ENCODE measurements at regions of chr5 and their contacts with region 1.

Region 1: DNA sequence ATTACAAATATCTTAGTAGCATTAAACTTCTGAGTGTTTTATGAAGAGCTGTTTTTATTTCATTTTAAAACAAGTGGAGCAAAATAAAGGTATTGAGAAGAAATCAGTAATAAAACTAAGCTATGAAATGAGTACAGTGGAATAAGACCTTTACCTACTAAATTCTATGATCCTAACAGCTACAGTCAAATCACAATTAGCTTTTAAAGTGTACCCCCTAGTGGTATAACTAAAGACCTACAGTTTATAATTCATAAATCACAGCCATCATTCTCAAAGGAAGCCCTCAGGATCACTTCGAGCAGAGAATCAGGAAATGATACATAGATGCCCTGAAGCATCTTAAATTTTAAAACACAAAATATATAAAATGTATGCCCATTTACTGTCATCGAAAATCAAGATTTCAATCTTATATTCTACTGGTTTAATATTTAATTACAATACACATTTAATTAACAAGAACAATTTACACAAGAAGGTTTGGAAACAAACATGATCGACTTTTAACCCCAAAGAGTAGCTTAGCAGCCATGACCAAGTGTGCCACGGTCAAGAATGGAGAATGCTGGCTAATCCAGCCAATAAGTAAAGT is 12.3 kb downstream of the CCNH start:
- DNase-seq: no peak
- H3K4me3 Mint-ChIP-seq: no peak overlapping the region
- H3K27ac Mint-ChIP-seq: no peak overlapping the region
- H3K4me1 Mint-ChIP-seq: peaks cover 15% of the 10 kb centered on the region
- H3K27me3 Mint-ChIP-seq: no peaks in the 10 kb centered on the region

Region 2: GRCh38 chr5:86880785-86881492 is 519.5 kb before region 1 on chr5:
- intact Hi-C with region 1: loop called (anchors 5 kb)
- DNase-seq: peak; percentile 18
- H3K4me3 Mint-ChIP-seq: no peak overlapping the region
- H3K27ac Mint-ChIP-seq: no peak overlapping the region
- H3K4me1 Mint-ChIP-seq: no peaks in the 10 kb centered on the region
- H3K27me3 Mint-ChIP-seq: no peaks in the 10 kb centered on the region

Region 3: GRCh38 chr5:86968301-86968753 is 432.1 kb before region 1 on chr5:
- intact Hi-C with region 1: loop called (anchors 1 kb)
- DNase-seq: no peak
- H3K4me3 Mint-ChIP-seq: no peak overlapping the region
- H3K27ac Mint-ChIP-seq: no peak overlapping the region
- H3K4me1 Mint-ChIP-seq: peaks cover 4% of the 10 kb centered on the region
- H3K27me3 Mint-ChIP-seq: peaks cover 36% of the 10 kb centered on the region

Region 4: DNA sequence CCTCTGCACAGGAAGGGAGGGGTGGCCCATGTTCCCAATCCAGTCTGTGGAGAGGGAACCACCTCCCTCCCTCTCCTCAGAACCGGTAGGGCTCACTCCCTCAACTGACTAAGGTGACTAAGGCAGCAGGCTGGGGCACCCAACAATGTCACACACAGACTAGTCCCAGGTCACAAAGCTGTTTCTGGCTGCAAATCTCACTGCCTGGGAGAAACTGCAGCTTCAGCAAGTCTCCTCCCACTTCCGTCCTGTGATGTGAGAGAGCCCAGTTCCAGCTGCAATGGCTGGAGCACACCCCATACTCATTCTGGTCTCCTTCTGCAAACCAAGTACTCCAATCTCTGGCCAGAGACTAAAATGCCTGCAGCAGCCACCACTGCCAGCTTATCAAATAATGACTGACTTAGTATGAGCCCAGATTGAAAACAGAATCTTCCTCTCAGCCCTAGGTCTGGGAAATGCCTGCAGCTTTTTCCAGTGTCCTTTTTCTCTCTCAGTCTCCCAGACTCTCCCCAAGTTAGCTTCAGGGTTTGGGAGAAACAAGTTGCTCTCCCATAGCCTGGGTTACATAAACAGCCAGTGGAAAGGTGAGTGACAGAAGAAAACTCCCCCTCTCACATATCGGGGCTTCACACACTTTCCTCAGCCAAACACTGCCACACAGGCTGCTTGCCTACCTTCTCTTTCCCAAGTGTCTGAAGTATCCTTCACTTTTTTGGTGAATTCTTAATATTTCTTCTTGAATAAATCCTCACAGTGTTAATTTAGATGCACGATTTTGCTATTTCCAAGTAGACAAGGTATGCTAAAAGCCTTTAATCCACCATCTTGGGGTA is 380.1 kb before region 1 on chr5:
- intact Hi-C with region 1: loop called (anchors 5 kb)
- DNase-seq: peak; percentile 26
- H3K4me3 Mint-ChIP-seq: no peak overlapping the region
- H3K27ac Mint-ChIP-seq: no peak overlapping the region
- H3K4me1 Mint-ChIP-seq: peaks cover 15% of the 10 kb centered on the region
- H3K27me3 Mint-ChIP-seq: peaks cover 5% of the 10 kb centered on the region

Region 5: DNA sequence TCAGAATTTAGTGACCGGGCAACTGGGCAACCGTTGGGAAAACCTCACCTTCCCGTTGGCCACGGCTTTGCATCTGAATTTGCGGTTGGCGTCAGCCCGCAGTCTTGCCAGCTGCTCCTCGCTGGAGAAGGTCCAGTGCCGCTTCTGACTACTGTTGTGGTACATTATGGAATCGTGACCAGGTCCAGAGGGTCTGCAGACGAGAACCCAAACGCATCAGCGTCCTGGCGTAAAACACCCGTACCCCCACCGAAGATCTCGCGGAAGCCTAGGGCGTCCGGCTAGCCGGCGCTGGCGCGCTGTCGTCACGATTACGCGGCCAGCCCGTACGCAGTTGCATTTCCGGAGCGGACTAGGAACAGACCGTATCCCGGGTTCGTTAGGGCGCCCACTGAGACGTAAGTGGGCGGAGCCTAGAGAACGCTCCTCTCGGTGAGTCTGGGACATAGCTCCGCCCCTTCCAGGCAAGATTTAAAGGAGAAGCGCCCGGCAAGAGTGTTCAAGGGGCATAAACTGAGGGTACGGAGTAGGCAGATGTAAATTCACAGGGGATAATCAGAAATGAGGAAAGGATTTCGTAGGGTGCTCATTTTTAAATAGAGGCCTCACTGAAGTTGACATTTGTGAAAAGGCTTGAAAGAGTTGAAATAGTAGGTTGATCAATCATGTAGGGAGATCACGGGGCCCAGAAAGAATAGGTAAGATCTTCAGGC is 12.4 kb after region 1 on chr5 and contains the start of gene CCNH:
- intact Hi-C with region 1: loop called (anchors 1 kb)
- DNase-seq: peak; percentile 95
- H3K4me3 Mint-ChIP-seq: peak within 1 kb of the TSS; percentile 99
- H3K27ac Mint-ChIP-seq: peak within 1 kb of the TSS; percentile 96
- H3K4me1 Mint-ChIP-seq: peaks cover 26% of the 10 kb centered on the region
- H3K27me3 Mint-ChIP-seq: peaks cover 4% of the 10 kb centered on the region
- total RNA-seq, gene CCNH: 68.2 and 70.1 TPM in 2 replicates